ENCODE measurements at regions of chr12 and their contacts with region 1.

Region 1: DNA sequence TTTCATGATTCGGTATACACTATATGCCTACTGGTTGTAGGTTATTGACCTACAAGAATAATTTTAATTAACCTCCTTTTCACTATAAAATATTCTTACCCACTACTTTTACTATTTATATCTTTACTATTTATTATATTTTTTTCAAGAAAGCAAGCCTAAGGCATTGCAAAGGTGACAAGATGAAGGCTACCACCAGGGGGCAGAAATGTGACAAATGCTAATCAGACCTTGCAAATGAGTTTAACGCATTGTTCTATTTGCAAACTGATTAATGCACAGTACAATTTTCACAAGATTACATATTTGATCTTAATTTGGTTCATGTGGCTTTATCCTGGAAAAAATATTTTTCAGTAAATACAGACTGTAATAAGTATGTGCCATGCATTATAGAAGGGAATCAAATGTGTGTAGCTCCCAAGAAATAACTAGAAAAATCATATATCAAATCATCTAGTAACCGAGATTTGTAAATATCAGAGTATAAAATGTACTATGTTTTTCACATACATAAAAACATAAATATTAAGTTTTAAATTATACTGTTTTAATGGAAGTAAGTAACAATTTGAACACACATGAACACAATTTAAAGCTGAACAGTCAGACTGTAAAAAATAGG is 107.0 kb downstream of the ADAMTS20 start:
- DNase-seq: no peak
- H3K4me3 ChIP-seq: no peak overlapping the region
- H3K27me3 ChIP-seq: no peaks in the 10 kb centered on the region
- CTCF ChIP-seq: peak; percentile 86

Region 2: GRCh38 chr12:43325786-43326185 is 119.3 kb before region 1 on chr12:
- CTCF ChIA-PET with region 1: no interaction called
- POLR2A ChIA-PET with region 1: no interaction called
- DNase-seq: no peak
- H3K4me3 ChIP-seq: no peak overlapping the region
- H3K27me3 ChIP-seq: no peaks in the 10 kb centered on the region
- CTCF ChIP-seq: no peak

Region 3: GRCh38 chr12:43361031-43361710 is 83.9 kb before region 1 on chr12:
- CTCF ChIA-PET with region 1: no interaction called
- POLR2A ChIA-PET with region 1: no interaction called
- DNase-seq: no peak
- H3K4me3 ChIP-seq: no peak overlapping the region
- H3K27me3 ChIP-seq: no peaks in the 10 kb centered on the region
- CTCF ChIP-seq: no peak

Region 4: DNA sequence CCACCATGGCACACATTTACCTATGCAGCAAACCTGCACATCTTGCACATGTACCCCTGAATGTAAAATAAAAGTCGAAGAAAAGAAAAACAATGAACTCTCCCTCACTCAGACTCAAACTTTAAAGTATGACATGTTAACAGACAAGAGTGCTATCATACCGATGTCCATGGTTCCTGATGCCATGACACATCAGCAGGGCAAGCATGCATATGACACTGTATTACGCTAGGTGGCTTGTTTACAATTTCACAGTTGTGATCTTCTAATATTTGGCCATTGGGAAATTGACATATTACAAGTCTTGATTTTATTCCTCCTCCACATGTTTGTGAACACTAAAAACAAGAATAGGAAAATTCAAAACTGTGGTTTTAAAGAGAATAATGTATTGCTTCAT is 19.7 kb before region 1 on chr12:
- CTCF ChIA-PET with region 1: interaction called, 14 read pairs
- POLR2A ChIA-PET with region 1: no interaction called
- DNase-seq: no peak
- H3K4me3 ChIP-seq: no peak overlapping the region
- H3K27me3 ChIP-seq: no peaks in the 10 kb centered on the region
- CTCF ChIP-seq: no peak

Region 5: DNA sequence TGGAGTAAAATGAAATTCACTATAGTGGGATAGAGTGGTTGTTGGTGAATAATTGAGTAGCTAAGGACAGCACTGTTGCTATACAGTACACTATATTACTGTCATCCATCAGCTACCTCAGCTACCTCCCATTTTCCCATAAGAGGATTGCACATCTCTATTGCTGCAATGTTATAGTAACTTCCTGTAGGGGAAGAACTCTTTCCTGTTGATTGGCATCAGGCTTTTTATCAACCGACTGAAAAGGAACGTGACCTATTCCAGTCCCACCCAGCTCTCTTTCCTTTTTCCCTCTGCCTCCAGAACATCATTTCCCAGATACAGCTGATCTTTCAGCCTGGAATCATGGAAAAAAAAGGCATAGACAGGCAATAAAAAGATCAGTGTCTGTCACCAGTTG is 10.4 kb before region 1 on chr12:
- CTCF ChIA-PET with region 1: interaction called, 14 read pairs
- POLR2A ChIA-PET with region 1: no interaction called
- DNase-seq: no peak
- H3K4me3 ChIP-seq: no peak overlapping the region
- H3K27me3 ChIP-seq: no peaks in the 10 kb centered on the region; the same call in 1 of the 2 replicates
- CTCF ChIP-seq: no peak

Region 6: GRCh38 chr12:43459285-43459684 is 14.2 kb after region 1 on chr12:
- CTCF ChIA-PET with region 1: interaction called, 10 read pairs
- POLR2A ChIA-PET with region 1: no interaction called
- DNase-seq: no peak
- H3K4me3 ChIP-seq: no peak overlapping the region
- H3K27me3 ChIP-seq: no peaks in the 10 kb centered on the region
- CTCF ChIP-seq: no peak

Region 7: GRCh38 chr12:43882578-43883178 is 437.6 kb after region 1 on chr12:
- CTCF ChIA-PET with region 1: interaction called, 10 read pairs
- POLR2A ChIA-PET with region 1: no interaction called
- DNase-seq: peak; percentile 4
- H3K4me3 ChIP-seq: no peak overlapping the region
- H3K27me3 ChIP-seq: no peaks in the 10 kb centered on the region
- CTCF ChIP-seq: peak; percentile 83